Activated naive CD4-positive, alpha-beta T cell treated with anti-CD3 and anti-CD28 coated beads for 36 hours (primary cell): ENCODE measurements at regions of chr15 and their contacts with region 1.

Region 1: GRCh38 chr15:73273181-73274002 is 95.4 kb downstream of the HCN4 start:
- DNase-seq: peak; percentile 64
- H3K4me3 Mint-ChIP-seq: no peak overlapping the region
- H3K27ac Mint-ChIP-seq: no peak overlapping the region
- H3K4me1 Mint-ChIP-seq: peaks cover 4% of the 10 kb centered on the region
- H3K27me3 Mint-ChIP-seq: no peaks in the 10 kb centered on the region

Region 2: GRCh38 chr15:73127301-73127936 is 146.0 kb before region 1 on chr15:
- CTCF ChIA-PET with region 1: no interaction called
- intact Hi-C with region 1: loop called (anchors 10 kb)
- DNase-seq: peak; percentile 33
- H3K4me3 Mint-ChIP-seq: no peak overlapping the region
- H3K27ac Mint-ChIP-seq: no peak overlapping the region
- H3K4me1 Mint-ChIP-seq: no peaks in the 10 kb centered on the region
- H3K27me3 Mint-ChIP-seq: no peaks in the 10 kb centered on the region

Region 3: DNA sequence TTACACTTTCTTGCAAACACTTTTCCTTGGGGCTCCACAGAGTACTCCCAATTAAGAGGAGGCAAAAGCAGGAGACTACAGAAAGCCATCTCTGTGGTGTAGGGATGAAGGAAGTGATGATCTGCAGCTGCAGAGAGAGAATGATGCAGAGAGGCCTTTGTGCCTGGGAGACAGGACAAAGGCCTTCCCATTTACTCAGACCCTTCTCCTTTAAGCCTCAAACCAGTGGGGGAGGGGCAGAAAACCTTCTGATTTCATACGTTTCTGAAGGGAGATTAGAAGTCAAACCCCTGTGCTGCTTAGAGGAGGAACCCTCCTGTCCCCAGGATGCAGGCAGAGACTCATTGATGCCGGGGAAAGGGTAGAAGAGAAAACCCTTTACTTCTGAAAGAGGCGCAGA is 90.3 kb before region 1 on chr15:
- CTCF ChIA-PET with region 1: no interaction called
- intact Hi-C with region 1: no loop called
- DNase-seq: no peak
- H3K4me3 Mint-ChIP-seq: no peak overlapping the region
- H3K27ac Mint-ChIP-seq: no peak overlapping the region
- H3K4me1 Mint-ChIP-seq: no peaks in the 10 kb centered on the region
- H3K27me3 Mint-ChIP-seq: no peaks in the 10 kb centered on the region